ENCODE measurements at regions of chr12 and their contacts with region 1.

Region 1: GRCh38 chr12:109385339-109386067 is 37.8 kb downstream of the MYO1H start:
- DNase-seq: peak in 4 of 5 donors; percentile 14 to 29 (median 28)
- H3K4me3 ChIP-seq: no peak overlapping the region
- H3K4me3 Mint-ChIP-seq: no peak overlapping the region
- H3K27ac ChIP-seq: no peak overlapping the region
- H3K27ac Mint-ChIP-seq: no peak overlapping the region
- H3K4me1 ChIP-seq: no peaks in the 10 kb centered on the region
- H3K4me1 Mint-ChIP-seq: no peaks in the 10 kb centered on the region
- H3K27me3 ChIP-seq: no peaks in the 10 kb centered on the region
- H3K27me3 Mint-ChIP-seq: peaks cover 10 to 18% of the 10 kb centered on the region in 2 donors

Region 2: DNA sequence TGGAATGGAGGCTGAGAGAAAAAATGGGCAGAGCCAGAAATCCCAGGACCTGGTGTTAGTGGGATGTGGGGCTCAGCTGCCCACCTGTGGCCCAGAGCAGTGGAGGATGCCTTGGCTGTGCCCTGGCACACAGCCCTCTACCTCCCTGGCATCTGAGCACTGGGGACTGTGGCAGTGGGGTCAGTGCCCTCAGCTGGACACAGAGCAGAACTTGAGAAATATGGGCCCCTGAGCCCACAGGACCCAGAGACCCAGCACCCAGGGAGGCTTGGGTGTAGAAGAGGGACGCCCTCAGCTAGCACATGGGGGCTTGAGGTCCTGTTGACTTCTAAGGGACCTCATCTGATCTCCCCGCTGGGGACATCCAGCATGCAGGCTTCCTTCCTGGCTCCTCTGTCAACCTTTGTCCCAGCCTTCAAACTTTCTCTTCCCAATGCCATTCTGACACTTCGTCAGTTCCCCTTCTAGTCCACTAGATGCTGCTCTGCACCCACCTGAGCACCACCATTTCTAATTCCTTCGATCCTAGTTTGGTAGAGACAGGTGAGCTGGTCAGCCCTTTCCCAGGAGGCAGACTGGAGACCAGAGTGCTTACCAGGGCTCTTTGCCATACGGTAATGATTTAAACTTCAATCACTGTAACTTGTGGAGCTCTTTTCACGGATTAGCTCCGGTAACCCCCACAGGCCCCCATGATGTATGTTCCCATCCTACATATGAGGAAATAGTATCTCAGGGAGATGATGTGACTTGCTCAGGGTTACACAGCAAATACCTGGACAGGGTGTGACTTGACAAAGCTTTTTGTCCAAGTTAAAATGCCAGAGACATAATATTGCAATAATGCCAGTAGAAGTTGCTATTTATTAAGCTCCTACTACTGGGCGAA is 1467.3 kb before region 1 on chr12:
- CTCF ChIA-PET with region 1: no interaction called
- POLR2A ChIA-PET with region 1: no interaction called
- intact Hi-C with region 1: loop called (anchors 5 kb)
- DNase-seq: peak in 1 of 5 donors; percentile 5
- H3K4me3 ChIP-seq: no peak overlapping the region
- H3K4me3 Mint-ChIP-seq: no peak overlapping the region
- H3K27ac ChIP-seq: no peak overlapping the region
- H3K27ac Mint-ChIP-seq: peak overlapping the region in 1 of 7 donors; percentile 16
- H3K4me1 ChIP-seq: no peaks in the 10 kb centered on the region
- H3K4me1 Mint-ChIP-seq: peaks cover 0 to under 1% (median 0%) of the 10 kb centered on the region in 4 donors
- H3K27me3 ChIP-seq: no peaks in the 10 kb centered on the region
- H3K27me3 Mint-ChIP-seq: peaks cover 21 to 37% of the 10 kb centered on the region in 2 donors

Region 3: DNA sequence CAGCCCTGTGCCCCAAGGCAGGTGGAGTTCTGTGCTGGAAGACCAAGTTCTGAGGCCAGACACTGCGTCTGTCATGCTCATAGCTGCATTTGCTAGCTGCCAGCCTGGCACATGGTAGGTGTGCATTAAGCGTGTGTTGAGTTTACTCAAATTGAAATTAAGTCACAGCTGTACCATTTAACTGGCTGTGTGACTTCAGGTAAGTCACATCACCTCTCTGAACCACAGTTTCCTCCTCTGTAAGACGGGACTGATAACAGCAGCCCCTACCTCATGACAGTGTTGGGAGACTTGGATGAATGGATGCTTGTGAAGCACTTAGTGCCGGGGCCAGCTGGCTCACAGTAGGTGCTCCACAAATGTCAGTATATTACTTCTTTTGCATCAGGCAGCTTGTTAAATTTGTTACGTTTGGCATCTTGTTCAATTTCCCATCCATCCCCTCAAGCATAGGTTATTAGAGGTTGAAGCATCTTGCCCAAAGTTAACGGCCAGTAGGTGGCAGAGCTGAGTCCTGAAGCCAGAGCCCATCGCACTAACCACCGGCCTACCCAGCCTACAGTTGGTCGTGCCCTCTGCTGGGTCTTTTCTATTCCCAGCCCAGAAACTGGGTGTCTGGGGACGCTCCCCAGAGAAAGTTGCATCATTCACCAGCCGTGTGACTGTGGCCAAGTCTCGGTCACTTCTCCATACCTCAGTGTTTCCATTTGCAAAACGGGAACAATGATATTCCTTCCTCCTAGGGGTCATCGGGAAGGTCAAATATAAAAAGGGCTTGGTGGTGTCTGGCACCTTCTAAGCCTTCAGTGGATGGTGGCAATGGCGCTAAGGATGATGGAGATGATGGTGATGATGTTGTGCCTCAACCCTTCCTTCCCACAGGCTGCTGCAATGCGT is 501.1 kb before region 1 on chr12:
- CTCF ChIA-PET with region 1: interaction called, 3 read pairs
- POLR2A ChIA-PET with region 1: no interaction called
- intact Hi-C with region 1: loop called (anchors 5 kb)
- DNase-seq: peak; percentile 51 to 58 (median 54)
- H3K4me3 ChIP-seq: no peak overlapping the region
- H3K4me3 Mint-ChIP-seq: no peak overlapping the region
- H3K27ac ChIP-seq: no peak overlapping the region
- H3K27ac Mint-ChIP-seq: peak overlapping the region in 1 of 7 donors; percentile 60
- H3K4me1 ChIP-seq: no peaks in the 10 kb centered on the region
- H3K4me1 Mint-ChIP-seq: peaks cover 0 to 2% (median under 1%) of the 10 kb centered on the region in 4 donors
- H3K27me3 ChIP-seq: no peaks in the 10 kb centered on the region
- H3K27me3 Mint-ChIP-seq: no peaks in the 10 kb centered on the region

Region 4: GRCh38 chr12:109110988-109111495 is 274.5 kb before region 1 on chr12:
- CTCF ChIA-PET with region 1: interaction called, 8 read pairs
- POLR2A ChIA-PET with region 1: no interaction called
- intact Hi-C with region 1: loop called (anchors 2 kb)
- DNase-seq: peak; percentile 25 to 74 (median 45)
- H3K4me3 ChIP-seq: peak overlapping the region; percentile 9 to 53
- H3K4me3 Mint-ChIP-seq: peak overlapping the region; percentile 73 to 88 (median 82)
- H3K27ac ChIP-seq: peak overlapping the region; percentile 68
- H3K27ac Mint-ChIP-seq: peak overlapping the region in 6 of 7 donors; percentile 73 to 91 (median 84)
- H3K4me1 ChIP-seq: peaks cover 7% of the 10 kb centered on the region
- H3K4me1 Mint-ChIP-seq: peaks cover 9 to 37% (median 20%) of the 10 kb centered on the region in 4 donors
- H3K27me3 ChIP-seq: no peaks in the 10 kb centered on the region
- H3K27me3 Mint-ChIP-seq: no peaks in the 10 kb centered on the region

Region 5: GRCh38 chr12:109264095-109264942 is 121.2 kb before region 1 on chr12:
- CTCF ChIA-PET with region 1: no interaction called
- POLR2A ChIA-PET with region 1: no interaction called
- intact Hi-C with region 1: loop called (anchors 5 kb)
- DNase-seq: peak in 3 of 5 donors; percentile 3 to 14 (median 9)
- H3K4me3 ChIP-seq: no peak overlapping the region
- H3K4me3 Mint-ChIP-seq: no peak overlapping the region
- H3K27ac ChIP-seq: no peak overlapping the region
- H3K27ac Mint-ChIP-seq: no peak overlapping the region
- H3K4me1 ChIP-seq: no peaks in the 10 kb centered on the region
- H3K4me1 Mint-ChIP-seq: no peaks in the 10 kb centered on the region
- H3K27me3 ChIP-seq: no peaks in the 10 kb centered on the region
- H3K27me3 Mint-ChIP-seq: no peaks in the 10 kb centered on the region

Region 6: GRCh38 chr12:109744986-109745942 is 359.8 kb after region 1 on chr12:
- CTCF ChIA-PET with region 1: no interaction called
- POLR2A ChIA-PET with region 1: no interaction called
- intact Hi-C with region 1: no loop called
- DNase-seq: no peak
- H3K4me3 ChIP-seq: no peak overlapping the region
- H3K4me3 Mint-ChIP-seq: no peak overlapping the region
- H3K27ac ChIP-seq: no peak overlapping the region
- H3K27ac Mint-ChIP-seq: no peak overlapping the region
- H3K4me1 ChIP-seq: no peaks in the 10 kb centered on the region
- H3K4me1 Mint-ChIP-seq: no peaks in the 10 kb centered on the region
- H3K27me3 ChIP-seq: no peaks in the 10 kb centered on the region
- H3K27me3 Mint-ChIP-seq: peaks cover 0 to 3% of the 10 kb centered on the region in 2 donors